A549 (cell line): ENCODE measurements at regions of chr6 and their contacts with region 1.

Region 1: GRCh38 chr6:26342106-26343004 is 22.6 kb upstream of the BTN3A2 start:
- DNase-seq: peak in 1 of 2 experiments; percentile 27
- ATAC-seq: no peak; a peak in 1 of 6 replicates
- H3K4me3 ChIP-seq: peak overlapping the region; percentile 42
- H3K27ac ChIP-seq: peak overlapping the region; percentile 64 to 84
- H3K4me1 ChIP-seq: peaks cover 16% of the 10 kb centered on the region; the same call in 2 of the 3 replicates
- CTCF ChIP-seq: no peak
- EP300 ChIP-seq: no peak
- POLR2A ChIP-seq: no peak
- RAD21 ChIP-seq: no peak

Region 2: GRCh38 chr6:26329763-26330511 is 12.4 kb before region 1 on chr6:
- CTCF ChIA-PET with region 1: interaction called, 20 read pairs
- POLR2A ChIA-PET with region 1: no interaction called
- DNase-seq: peak in 1 of 2 experiments; percentile 78
- ATAC-seq: peak; percentile 27 to 57; a peak in 4 of 6 replicates
- H3K4me3 ChIP-seq: peak overlapping the region; percentile 69
- H3K27ac ChIP-seq: no peak overlapping the region
- H3K4me1 ChIP-seq: peaks cover 7% of the 10 kb centered on the region; the same call in 1 of the 3 replicates
- CTCF ChIP-seq: no peak
- EP300 ChIP-seq: no peak
- POLR2A ChIP-seq: no peak
- RAD21 ChIP-seq: no peak

Region 3: GRCh38 chr6:26394289-26394688 is 51.9 kb after region 1 on chr6:
- CTCF ChIA-PET with region 1: interaction called, 13 read pairs
- POLR2A ChIA-PET with region 1: no interaction called
- DNase-seq: peak in 1 of 2 experiments; percentile 55
- ATAC-seq: peak in 1 of 2 experiments; percentile 69; a peak in 3 of 6 replicates
- H3K4me3 ChIP-seq: no peak overlapping the region
- H3K27ac ChIP-seq: peak overlapping the region in 1 of 2 experiments; percentile 4; a peak in 1 of 6 replicates
- H3K4me1 ChIP-seq: peaks cover 14% of the 10 kb centered on the region; the same call in 2 of the 3 replicates
- CTCF ChIP-seq: no peak
- EP300 ChIP-seq: no peak
- POLR2A ChIP-seq: no peak
- RAD21 ChIP-seq: no peak

Region 4: DNA sequence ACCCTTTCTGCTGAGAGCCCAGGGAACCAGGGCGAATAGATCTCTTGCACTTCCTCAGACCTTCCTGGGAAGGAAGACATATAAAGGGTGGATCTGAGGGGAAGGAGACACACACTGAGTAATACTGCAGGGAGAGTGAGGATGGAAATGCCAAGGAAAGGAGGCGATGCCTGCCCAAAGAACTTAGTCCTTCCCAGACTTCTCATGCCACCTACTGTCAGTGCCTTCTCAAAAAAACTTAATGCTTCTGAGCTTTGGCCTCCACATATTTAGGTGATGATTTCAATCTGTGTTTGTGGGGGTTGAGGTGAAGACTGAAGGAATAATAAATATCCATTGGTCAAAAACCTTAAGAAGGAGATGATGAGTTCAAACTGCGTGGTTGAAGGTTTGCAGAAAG is 69.4 kb after region 1 on chr6:
- CTCF ChIA-PET with region 1: interaction called, 20 read pairs
- POLR2A ChIA-PET with region 1: no interaction called
- DNase-seq: no peak
- ATAC-seq: no peak; a peak in 1 of 6 replicates
- H3K4me3 ChIP-seq: no peak overlapping the region
- H3K27ac ChIP-seq: no peak overlapping the region
- H3K4me1 ChIP-seq: no peaks in the 10 kb centered on the region
- CTCF ChIP-seq: no peak
- EP300 ChIP-seq: no peak
- POLR2A ChIP-seq: no peak
- RAD21 ChIP-seq: peak in 1 of 2 experiments; percentile 17; a peak in 1 of 5 replicates

Region 5: GRCh38 chr6:26521600-26522391 is 179.4 kb after region 1 on chr6:
- CTCF ChIA-PET with region 1: interaction called, 14 read pairs
- POLR2A ChIA-PET with region 1: no interaction called
- DNase-seq: peak; percentile 71 to 90
- ATAC-seq: peak; percentile 93 to 96
- H3K4me3 ChIP-seq: peak overlapping the region; percentile 48
- H3K27ac ChIP-seq: peak overlapping the region; percentile 99
- H3K4me1 ChIP-seq: peaks cover 28% of the 10 kb centered on the region
- CTCF ChIP-seq: peak; percentile 46; the same call in 2 of the 3 replicates
- EP300 ChIP-seq: no peak
- POLR2A ChIP-seq: peak; percentile 61
- RAD21 ChIP-seq: peak; percentile 22 to 46; a peak in 3 of 5 replicates

Region 6: DNA sequence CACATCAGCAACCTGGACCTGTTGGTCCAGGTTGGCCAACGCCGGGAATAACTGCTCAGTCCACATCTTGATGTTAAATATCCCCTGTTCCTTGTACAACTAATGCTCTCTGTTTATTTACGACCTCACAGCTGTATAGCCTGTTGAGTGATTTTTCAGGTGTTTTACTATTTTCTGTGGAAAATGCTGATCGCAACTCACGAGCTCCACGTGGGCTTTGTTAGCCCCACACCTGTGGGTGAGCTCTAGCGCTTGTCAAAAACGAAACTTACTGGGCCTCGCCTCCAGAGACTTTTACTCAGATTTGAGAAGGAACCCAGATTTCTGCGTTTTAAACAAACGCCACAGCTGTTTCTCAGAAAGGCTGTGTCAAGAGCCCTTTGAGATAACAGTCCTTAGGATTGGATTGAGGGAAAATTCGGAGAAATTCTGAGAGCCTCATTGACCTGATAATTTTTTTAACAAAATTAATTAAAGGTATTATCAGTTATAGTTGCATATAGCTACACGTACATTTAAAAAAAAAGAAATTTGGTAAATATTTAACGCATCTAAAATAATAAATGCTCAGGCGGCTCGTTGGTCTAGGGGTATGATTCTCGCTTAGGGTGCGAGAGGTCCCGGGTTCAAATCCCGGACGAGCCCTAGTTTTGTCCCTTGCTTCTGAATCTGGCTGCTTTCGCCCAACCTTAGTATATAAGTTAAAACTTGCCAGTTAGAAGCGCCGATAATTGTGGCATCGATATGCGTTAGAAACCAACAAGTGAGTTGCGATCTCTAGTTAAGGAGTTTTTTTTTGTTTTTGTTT is 212.5 kb after region 1 on chr6:
- CTCF ChIA-PET with region 1: interaction called, 14 read pairs
- POLR2A ChIA-PET with region 1: no interaction called
- DNase-seq: peak in 1 of 2 experiments; percentile 74
- ATAC-seq: peak in 1 of 2 experiments; percentile 34; a peak in 2 of 6 replicates
- H3K4me3 ChIP-seq: peak overlapping the region; percentile 48
- H3K27ac ChIP-seq: peak overlapping the region; percentile 41 to 81; a peak in 5 of 6 replicates
- H3K4me1 ChIP-seq: peaks cover 9% of the 10 kb centered on the region; the same call in 2 of the 3 replicates
- CTCF ChIP-seq: no peak
- EP300 ChIP-seq: no peak
- POLR2A ChIP-seq: no peak
- RAD21 ChIP-seq: no peak